Dorsolateral prefrontal cortex (tissue), 120 donors: ENCODE measurements at regions of chr7 and their contacts with region 1.

Region 1: GRCh38 chr7:25565949-25566348 is 337.7 kb upstream of the NPVF start:
- DNase-seq: peak in 8 of 10 donors; percentile 25 to 72 (median 58)
- H3K4me3 ChIP-seq: peak overlapping the region in 11 of 59 donors; percentile 4 to 41 (median 25)
- H3K27ac ChIP-seq: no peak overlapping the region
- H3K27me3 ChIP-seq: peaks cover 0 to 3% (median 0%) of the 10 kb centered on the region in 45 donors
- CTCF ChIP-seq: peak; percentile 99 to 100 (median 100)

Region 2: GRCh38 chr7:25259587-25260243 is 306.2 kb before region 1 on chr7:
- intact Hi-C with region 1: loop called (anchors 2 to 5 kb)
- DNase-seq: peak in 8 of 10 donors; percentile 23 to 81 (median 63)
- H3K4me3 ChIP-seq: peak overlapping the region in 2 of 59 donors; percentile 12 to 15
- H3K27ac ChIP-seq: peak overlapping the region in 5 of 59 donors; percentile 15 to 58 (median 26)
- H3K27me3 ChIP-seq: peaks cover 0 to 4% (median 0%) of the 10 kb centered on the region in 45 donors
- CTCF ChIP-seq: peak; percentile 78 to 99 (median 93)

Region 3: DNA sequence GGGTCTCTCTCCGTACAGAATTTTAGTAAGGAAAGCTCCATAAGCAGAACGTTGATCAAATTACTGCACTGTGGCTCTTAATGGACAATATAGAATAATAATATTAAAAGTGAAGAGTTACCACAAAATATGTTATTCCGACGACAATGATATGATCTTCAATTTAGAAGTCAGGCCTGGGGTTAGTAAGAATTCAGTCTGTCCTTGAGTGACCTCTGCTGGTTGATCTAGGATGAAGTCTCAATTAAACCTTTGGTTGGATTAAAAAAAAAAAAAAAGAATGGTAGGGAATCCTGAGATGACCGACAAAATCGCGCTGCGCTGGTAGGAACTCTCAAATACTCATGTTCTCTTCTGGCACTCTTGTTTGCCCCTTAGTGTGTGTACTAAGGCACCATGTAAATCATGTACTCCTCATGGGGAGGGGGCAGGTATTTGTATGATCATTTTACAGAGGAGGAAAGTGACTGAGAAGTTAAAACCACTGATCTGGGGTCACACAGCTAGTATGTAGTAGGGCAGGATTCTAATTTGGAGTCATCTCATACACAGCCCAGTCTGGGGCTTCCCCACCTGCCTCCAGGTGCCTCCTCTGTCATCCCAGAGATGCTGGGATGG is 176.4 kb before region 1 on chr7:
- intact Hi-C with region 1: loop called (anchors 2 kb)
- DNase-seq: peak in 1 of 10 donors; percentile 56
- H3K4me3 ChIP-seq: no peak overlapping the region
- H3K27ac ChIP-seq: no peak overlapping the region
- H3K27me3 ChIP-seq: no peaks in the 10 kb centered on the region
- CTCF ChIP-seq: peak; percentile 60 to 94 (median 79)

Region 4: GRCh38 chr7:25720427-25720826 is 154.5 kb after region 1 on chr7:
- intact Hi-C with region 1: loop called in 1 of 2 experiments (anchors 5 kb)
- DNase-seq: no peak
- H3K4me3 ChIP-seq: no peak overlapping the region
- H3K27ac ChIP-seq: no peak overlapping the region
- H3K27me3 ChIP-seq: no peaks in the 10 kb centered on the region
- CTCF ChIP-seq: peak in 53 of 56 donors; percentile 20 to 61 (median 44)